OCI-LY7 (cell line): ENCODE measurements at regions of chr10 and their contacts with region 1.

Region 1: GRCh38 chr10:58291538-58292174 is 22.7 kb downstream of the CISD1 start:
- DNase-seq: peak; percentile 70
- H3K4me3 ChIP-seq: no peak overlapping the region
- H3K27ac ChIP-seq: no peak overlapping the region
- H3K4me1 ChIP-seq: no peaks in the 10 kb centered on the region
- CTCF ChIP-seq: peak; percentile 94

Region 2: GRCh38 chr10:58137813-58138212 is 153.8 kb before region 1 on chr10:
- CTCF ChIA-PET with region 1: no interaction called
- POLR2A ChIA-PET with region 1: no interaction called
- intact Hi-C with region 1: no loop called
- DNase-seq: no peak
- H3K4me3 ChIP-seq: no peak overlapping the region
- H3K27ac ChIP-seq: no peak overlapping the region
- H3K4me1 ChIP-seq: no peaks in the 10 kb centered on the region
- CTCF ChIP-seq: no peak

Region 3: DNA sequence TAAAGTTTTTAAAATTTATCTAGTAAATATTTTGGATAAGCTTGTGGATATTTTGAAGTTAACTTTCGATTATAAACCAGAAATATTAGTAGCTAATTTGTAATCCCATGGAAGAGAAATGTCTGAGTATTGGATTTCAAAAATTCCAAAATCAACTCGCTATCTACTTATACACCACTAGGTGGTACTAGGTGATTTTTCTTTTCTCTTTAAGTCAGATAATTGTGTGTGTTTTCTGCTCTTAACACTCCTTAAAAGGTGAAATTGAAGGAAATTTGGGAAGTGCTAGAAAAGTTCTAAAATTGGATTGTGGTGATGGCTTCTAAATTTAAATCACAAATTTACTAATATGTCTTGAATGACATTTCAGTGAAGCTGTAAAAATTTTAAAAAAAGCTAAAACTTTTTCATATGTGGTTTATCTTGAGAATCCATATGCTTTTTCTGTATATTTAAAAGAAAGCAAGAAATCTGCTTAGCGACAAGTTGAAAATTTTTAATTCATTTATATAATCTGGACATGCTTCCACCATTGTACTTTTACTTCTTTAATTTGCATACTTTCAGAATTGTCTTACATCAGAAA is 114.2 kb before region 1 on chr10:
- CTCF ChIA-PET with region 1: interaction called, 12 read pairs
- POLR2A ChIA-PET with region 1: interaction called, 4 read pairs
- intact Hi-C with region 1: loop called (anchors 1 kb)
- DNase-seq: peak; percentile 35
- H3K4me3 ChIP-seq: no peak overlapping the region
- H3K27ac ChIP-seq: no peak overlapping the region
- H3K4me1 ChIP-seq: no peaks in the 10 kb centered on the region
- CTCF ChIP-seq: peak; percentile 92

Region 4: DNA sequence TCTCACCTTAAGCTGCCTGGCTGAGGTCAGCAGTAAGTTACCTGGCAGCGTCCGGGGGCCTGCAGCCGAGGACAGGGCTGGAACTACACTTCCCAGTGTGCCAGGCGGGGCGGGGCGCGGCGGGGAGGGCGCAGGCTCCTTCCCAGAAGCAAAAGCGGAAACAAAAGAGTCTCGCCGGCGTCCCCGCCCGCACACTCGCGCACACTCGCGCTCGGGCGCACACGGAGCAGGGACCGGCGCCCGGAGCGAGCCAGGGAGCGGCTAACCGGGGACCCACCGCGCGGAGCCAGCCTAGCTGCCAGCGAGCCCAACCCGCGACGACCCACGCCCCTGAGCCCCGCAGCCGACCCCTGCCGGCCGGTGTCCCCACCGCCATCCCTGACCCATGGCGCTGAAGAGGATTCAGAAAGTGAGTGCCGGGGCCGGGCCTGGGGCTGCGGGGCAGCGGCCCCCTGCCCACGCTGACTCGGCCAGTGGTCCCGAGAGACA is 43.2 kb after region 1 on chr10 and contains the start of gene UBE2D1:
- CTCF ChIA-PET with region 1: no interaction called
- POLR2A ChIA-PET with region 1: no interaction called
- intact Hi-C with region 1: loop called (anchors 5 kb)
- DNase-seq: peak; percentile 81
- H3K4me3 ChIP-seq: peak within 1 kb of the TSS; percentile 98
- H3K27ac ChIP-seq: no peak within 1 kb of the TSS
- H3K4me1 ChIP-seq: peaks cover 14% of the 10 kb centered on the region
- CTCF ChIP-seq: peak; percentile 42
- total RNA-seq, gene UBE2D1: 4.8 and 6.8 TPM in 2 replicates